A673 (cell line): ENCODE measurements at regions of chr21 and their contacts with region 1.

Region 1: DNA sequence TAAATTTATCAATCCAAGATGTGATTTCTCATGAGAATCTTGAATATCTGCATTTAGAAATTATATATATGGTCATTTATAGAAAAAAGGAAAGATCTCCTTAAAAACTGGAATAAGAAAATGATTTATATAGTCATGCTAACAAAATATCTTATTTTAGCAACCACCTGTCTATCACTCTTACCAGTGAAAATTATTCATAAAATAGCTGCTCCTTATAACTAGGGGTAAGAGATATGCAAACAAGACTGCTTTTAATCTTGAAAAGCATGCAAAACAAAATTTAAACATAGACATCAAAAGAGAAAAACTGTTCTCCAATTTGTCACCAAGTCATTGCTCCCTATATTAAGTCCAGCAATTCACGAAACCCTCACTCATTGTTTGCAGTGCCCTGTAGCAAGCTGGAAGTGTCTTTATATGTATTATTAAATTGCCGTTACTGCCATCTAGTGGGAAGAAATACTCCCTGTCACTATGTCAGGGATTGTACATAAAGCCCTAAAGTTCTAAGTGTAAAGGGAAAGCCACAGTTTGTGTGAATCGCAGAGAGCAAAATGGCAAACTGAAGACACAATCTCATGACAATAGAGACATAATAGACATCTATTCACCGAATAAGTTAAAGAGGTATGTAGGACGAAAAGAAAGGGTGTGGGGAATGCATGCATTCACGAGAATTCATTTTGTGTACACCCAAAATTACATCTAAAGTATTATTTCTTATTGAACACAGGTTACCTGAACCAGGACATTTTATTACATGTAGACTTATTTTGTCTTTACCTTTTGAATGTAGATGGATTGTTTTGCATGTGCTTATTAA is 600.5 kb downstream of the USP25 start:
- DNase-seq: peak; percentile 65
- H3K4me3 ChIP-seq: no peak overlapping the region
- H3K27ac ChIP-seq: no peak overlapping the region
- H3K4me1 ChIP-seq: no peaks in the 10 kb centered on the region
- H3K27me3 ChIP-seq: no peaks in the 10 kb centered on the region
- CTCF ChIP-seq: peak; percentile 70

Region 2: GRCh38 chr21:15894596-15894995 is 435.7 kb before region 1 on chr21:
- CTCF ChIA-PET with region 1: no interaction called
- POLR2A ChIA-PET with region 1: no interaction called
- intact Hi-C with region 1: loop called (anchors 5 kb)
- DNase-seq: peak; percentile 4
- H3K4me3 ChIP-seq: no peak overlapping the region
- H3K27ac ChIP-seq: no peak overlapping the region
- H3K4me1 ChIP-seq: no peaks in the 10 kb centered on the region
- H3K27me3 ChIP-seq: no peaks in the 10 kb centered on the region
- CTCF ChIP-seq: peak; percentile 57

Region 3: DNA sequence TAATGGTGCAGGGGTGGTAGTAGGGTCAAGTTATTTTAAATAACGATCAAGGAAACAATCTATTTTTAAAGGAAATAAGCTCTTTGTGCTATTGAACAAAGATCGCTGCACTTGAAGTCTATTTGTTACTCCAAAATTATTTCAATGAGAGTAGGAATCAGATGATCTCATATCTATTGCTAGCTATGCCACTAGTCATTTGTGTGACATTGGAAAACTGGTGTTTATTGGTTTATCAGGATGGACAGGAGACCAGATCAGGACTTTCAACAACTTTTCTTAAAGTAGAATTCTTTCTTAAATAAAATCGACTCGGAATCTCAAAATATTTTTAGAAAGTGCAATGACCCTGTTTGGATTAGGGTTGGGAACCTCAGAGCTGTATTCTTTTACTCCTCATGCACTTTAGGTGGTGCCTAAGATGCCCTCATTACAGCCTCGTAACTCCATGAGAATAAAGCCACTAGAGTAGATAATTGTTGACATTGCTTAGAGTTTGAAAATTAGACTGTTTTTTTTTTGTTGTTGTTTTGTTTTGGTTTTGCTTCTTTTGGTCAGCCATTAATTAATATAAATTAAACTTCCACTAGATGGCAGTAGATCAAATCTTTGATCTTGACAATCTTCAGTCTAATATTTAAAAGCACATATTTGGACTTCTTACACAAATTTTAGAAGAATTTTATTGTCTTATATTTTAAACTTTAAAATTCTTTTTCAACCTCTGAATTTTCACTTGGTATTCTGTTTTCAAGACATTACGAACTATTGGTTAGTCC is 248.1 kb before region 1 on chr21:
- CTCF ChIA-PET with region 1: interaction called, 4 read pairs
- POLR2A ChIA-PET with region 1: no interaction called
- intact Hi-C with region 1: loop called (anchors 1 kb)
- DNase-seq: peak; percentile 33
- H3K4me3 ChIP-seq: no peak overlapping the region
- H3K27ac ChIP-seq: no peak overlapping the region
- H3K4me1 ChIP-seq: no peaks in the 10 kb centered on the region
- H3K27me3 ChIP-seq: no peaks in the 10 kb centered on the region
- CTCF ChIP-seq: peak; percentile 59

Region 4: DNA sequence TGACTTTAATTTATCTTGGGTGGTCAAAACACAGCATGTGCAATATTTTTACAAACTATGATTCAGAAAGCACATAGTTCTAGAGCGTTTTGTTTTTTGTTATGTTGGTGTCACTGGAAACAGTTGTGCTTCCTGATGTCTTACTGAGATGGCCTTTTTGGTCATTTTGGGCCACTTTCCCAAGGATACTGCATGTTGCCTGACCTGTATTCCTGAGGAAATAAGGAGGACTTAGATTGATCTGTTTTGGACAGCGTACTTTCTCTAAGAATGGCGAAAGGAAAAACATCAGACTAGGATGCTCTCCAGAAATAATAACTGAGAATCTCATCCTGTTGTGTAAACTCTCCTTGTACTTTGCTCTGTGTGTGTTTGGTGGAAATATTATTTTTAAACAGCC is 149.3 kb before region 1 on chr21:
- CTCF ChIA-PET with region 1: no interaction called
- POLR2A ChIA-PET with region 1: no interaction called
- intact Hi-C with region 1: no loop called
- DNase-seq: no peak
- H3K4me3 ChIP-seq: no peak overlapping the region
- H3K27ac ChIP-seq: no peak overlapping the region
- H3K4me1 ChIP-seq: no peaks in the 10 kb centered on the region
- H3K27me3 ChIP-seq: no peaks in the 10 kb centered on the region
- CTCF ChIP-seq: no peak

Region 5: GRCh38 chr21:16294128-16294527 is 36.2 kb before region 1 on chr21:
- CTCF ChIA-PET with region 1: no interaction called
- POLR2A ChIA-PET with region 1: no interaction called
- intact Hi-C with region 1: no loop called
- DNase-seq: no peak
- H3K4me3 ChIP-seq: no peak overlapping the region
- H3K27ac ChIP-seq: no peak overlapping the region
- H3K4me1 ChIP-seq: no peaks in the 10 kb centered on the region
- H3K27me3 ChIP-seq: no peaks in the 10 kb centered on the region
- CTCF ChIP-seq: no peak